ENCODE measurements at regions of chr16 and their contacts with region 1.

Region 1: DNA sequence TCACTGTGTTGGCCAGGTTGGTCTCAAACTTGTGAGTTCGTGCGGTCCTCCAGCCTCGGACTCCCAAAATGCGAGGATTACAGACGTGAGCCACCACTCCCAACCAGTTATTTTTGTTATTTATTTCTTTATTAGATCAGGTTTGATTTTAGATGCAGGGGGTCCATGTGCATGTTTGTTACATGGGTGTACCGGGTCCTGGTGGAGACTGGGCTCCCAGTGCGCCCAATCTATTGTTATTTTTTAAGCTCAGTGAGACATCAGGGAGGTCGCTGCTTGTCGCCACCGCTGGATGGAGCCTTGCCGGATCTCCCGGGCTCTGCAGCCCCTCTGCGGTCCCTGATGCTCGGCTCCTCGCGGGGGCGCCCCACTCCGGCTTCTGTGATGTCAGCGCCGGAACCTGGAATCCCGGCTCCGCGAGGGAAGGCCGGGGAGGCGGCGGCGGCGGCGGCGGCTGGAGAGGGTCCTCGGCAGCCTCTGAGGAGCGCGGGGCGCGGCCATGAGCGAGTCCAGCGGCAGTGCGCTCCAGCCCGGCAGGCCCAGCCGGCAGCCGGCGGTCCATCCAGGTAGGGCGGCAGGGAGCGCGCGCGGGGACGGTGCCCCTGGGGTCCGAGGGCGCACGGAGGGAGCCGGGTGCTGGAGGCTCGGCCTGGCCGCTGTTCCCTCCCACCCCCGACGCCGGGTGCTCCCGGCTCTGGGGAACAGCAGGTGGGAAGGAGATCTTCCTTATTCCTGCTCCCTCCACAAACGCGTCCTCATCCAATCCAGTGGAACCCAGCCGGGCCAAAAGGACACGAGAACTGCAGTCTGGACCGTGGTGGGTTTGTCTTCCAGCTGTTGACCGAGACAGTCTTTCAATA is at the start of gene TMC7:
- DNase-seq: peak; percentile 80
- ATAC-seq: peak; percentile 94
- H3K4me3 ChIP-seq: peak within 1 kb of the TSS; percentile 58 to 68
- H3K27ac ChIP-seq: peak within 1 kb of the TSS; percentile 60
- H3K4me1 ChIP-seq: peaks cover 9 to 24% of the 10 kb centered on the region in 2 experiments; a peak in 3 of 4 replicates
- H3K27me3 ChIP-seq: no peaks in the 10 kb centered on the region
- CTCF ChIP-seq: peak; percentile 80 to 99 (median 82)
- POLR2A ChIP-seq: no peak
- RAD21 ChIP-seq: peak; percentile 97
- total RNA-seq, gene TMC7: 5.2 TPM

Region 2: DNA sequence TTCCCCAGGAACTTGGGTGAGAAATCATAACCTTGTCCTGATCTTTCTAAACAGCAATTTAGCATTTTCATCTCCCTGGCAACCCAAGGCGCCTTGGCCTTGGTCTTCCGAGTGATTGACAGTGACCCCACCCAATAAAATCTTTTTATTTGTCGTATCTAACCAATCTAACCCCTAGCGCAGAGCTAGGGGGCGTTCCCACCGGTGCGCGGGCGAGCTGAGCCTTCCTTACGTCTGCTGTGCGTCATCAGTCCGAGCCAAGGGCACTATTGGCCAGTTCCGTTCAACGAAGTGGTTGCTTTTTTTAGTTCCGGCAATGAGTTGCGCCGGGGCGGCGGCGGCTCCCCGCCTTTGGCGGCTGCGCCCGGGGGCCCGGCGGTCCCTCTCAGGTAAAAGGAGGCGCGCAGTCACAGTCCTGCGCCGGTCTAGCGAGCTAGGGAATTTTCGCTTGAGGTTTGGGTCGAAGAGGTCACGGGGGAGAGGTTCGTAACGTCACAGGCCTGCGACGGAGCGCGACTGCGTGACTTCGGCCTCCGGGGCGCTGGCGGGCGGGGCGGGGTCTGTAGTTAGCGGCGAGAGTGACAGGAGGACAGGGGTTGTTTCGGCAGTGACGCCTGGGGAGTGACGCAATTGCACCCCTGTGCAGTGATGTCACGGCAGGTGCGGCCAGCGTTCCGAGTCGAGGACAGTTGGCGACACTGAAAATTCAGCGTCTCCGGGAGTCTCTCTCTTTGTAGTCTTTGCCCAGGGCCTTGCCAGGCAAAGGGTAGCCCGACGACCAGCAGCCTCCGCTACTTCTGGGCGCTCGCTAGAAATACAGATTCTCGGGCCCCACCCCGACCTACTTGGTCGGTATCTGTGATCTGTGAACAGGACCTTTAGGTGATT is 83.8 kb after region 1 on chr16 and contains the start of gene COQ7:
- CTCF ChIA-PET with region 1: interaction called, 9 read pairs
- POLR2A ChIA-PET with region 1: no interaction called
- RAD21 ChIA-PET with region 1: interaction called, 3 read pairs
- intact Hi-C with region 1: loop called (anchors 1 kb)
- DNase-seq: peak; percentile 100
- ATAC-seq: peak; percentile 93
- H3K4me3 ChIP-seq: peak within 1 kb of the TSS; percentile 63 to 85
- H3K27ac ChIP-seq: peak within 1 kb of the TSS; percentile 98
- H3K4me1 ChIP-seq: peaks cover 0 to 12% of the 10 kb centered on the region in 2 experiments; a peak in 3 of 4 replicates
- H3K27me3 ChIP-seq: no peaks in the 10 kb centered on the region
- CTCF ChIP-seq: no peak
- POLR2A ChIP-seq: no peak
- RAD21 ChIP-seq: no peak
- total RNA-seq, gene COQ7: 26.6 TPM

Region 3: GRCh38 chr16:19375561-19376158 is 391.9 kb after region 1 on chr16:
- CTCF ChIA-PET with region 1: no interaction called
- POLR2A ChIA-PET with region 1: no interaction called
- RAD21 ChIA-PET with region 1: no interaction called
- intact Hi-C with region 1: loop called (anchors 5 kb)
- DNase-seq: peak; percentile 60
- ATAC-seq: peak; percentile 89
- H3K4me3 ChIP-seq: no peak overlapping the region
- H3K27ac ChIP-seq: no peak overlapping the region
- H3K4me1 ChIP-seq: no peaks in the 10 kb centered on the region
- H3K27me3 ChIP-seq: no peaks in the 10 kb centered on the region
- CTCF ChIP-seq: peak; percentile 85 to 96 (median 90)
- POLR2A ChIP-seq: no peak
- RAD21 ChIP-seq: peak; percentile 99

Measured in HCT116 (cell line).